Cardiac septum (tissue), 1 donor: ENCODE measurements at regions of chr4 and their contacts with region 1.

Region 1: DNA sequence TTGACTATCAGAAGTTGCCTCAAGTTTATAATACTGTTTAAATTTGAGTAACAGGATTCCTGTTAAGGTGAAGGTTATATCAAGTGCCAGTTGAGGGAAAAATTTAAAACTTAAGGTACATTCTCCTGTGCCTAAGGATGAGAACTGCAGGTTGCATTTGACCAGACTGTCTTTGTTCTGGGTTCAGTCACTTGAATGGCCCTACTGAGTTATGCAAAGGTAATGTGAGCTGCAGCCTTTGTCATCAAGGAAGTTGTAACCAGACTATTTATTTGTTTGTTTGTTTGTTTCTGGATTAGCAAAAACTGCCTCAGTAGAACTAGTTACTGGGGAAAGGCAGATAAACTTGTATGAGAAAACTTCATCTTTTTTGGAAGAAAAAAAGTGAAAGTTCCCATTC is 131.9 kb downstream of the ATOH1 start:
- DNase-seq: no peak

Region 2: GRCh38 chr4:93983140-93983539 is 22.7 kb after region 1 on chr4:
- intact Hi-C with region 1: loop called (anchors 1 kb)
- DNase-seq: no peak

Region 3: DNA sequence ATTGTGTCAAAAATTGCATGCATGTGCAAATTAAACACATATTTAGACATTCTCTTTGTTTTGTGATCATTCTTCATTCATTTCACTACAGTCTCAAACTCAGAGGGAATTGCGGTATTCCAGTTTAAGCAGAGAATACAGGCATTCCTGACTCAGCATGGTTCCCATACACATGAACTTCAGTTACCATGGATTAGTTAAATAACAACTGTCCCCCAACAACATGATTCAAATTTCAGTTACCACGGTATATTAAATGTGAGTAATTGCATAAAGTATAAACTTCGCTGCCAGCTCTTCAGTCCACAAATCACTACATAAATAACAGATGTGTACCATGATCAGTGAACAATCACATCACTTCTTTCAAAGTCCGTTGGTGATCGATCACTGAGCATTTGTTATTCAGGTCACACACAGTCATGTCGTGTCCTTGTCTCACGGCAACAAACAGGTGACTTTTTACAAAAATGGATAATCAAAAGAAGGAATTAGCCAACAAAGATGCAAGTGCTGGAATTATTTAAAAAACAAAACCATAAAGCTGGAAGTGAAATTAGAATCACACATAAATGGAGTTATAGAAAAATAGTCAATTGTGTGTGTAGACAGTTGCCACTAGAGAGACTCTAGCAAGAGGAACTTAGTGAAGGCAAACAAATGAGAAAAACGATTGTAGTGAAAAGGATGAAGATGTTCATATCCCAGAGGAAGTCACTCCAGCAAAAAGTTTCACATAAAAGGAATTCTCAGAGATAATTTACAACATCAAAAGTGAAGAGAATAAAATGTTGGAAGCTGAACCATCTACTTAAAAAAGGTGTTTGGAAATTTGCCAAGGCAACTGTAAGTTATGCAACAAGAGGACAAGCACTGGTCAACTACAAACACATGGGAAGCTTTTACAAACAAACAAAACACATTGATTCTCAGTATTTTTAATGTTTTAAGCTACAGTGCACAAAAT is 108.6 kb after region 1 on chr4:
- intact Hi-C with region 1: no loop called
- DNase-seq: no peak